MCF 10A (cell line): ENCODE measurements at regions of chr20 and their contacts with region 1.

Region 1: GRCh38 chr20:733861-734260 is 34.4 kb downstream of the SLC52A3 start:
- DNase-seq: no peak
- H3K4me3 Mint-ChIP-seq: no peak overlapping the region
- H3K27ac Mint-ChIP-seq: no peak overlapping the region
- H3K4me1 Mint-ChIP-seq: no peaks in the 10 kb centered on the region
- H3K27me3 Mint-ChIP-seq: peaks cover 38% of the 10 kb centered on the region
- CTCF ChIP-seq: no peak

Region 2: GRCh38 chr20:667391-667964 is 66.4 kb before region 1 on chr20:
- CTCF ChIA-PET with region 1: interaction called, 15 read pairs
- POLR2A ChIA-PET with region 1: interaction called, 3 read pairs
- intact Hi-C with region 1: loop called (anchors 5 kb)
- DNase-seq: peak; percentile 55
- H3K4me3 Mint-ChIP-seq: no peak overlapping the region
- H3K27ac Mint-ChIP-seq: no peak overlapping the region
- H3K4me1 Mint-ChIP-seq: no peaks in the 10 kb centered on the region
- H3K27me3 Mint-ChIP-seq: peaks cover 41% of the 10 kb centered on the region
- CTCF ChIP-seq: peak; percentile 86

Region 3: GRCh38 chr20:844473-845225 is 110.8 kb after region 1 on chr20:
- CTCF ChIA-PET with region 1: no interaction called
- POLR2A ChIA-PET with region 1: no interaction called
- intact Hi-C with region 1: no loop called
- DNase-seq: peak; percentile 90
- H3K4me3 Mint-ChIP-seq: peak overlapping the region; percentile 59
- H3K27ac Mint-ChIP-seq: peak overlapping the region; percentile 23
- H3K4me1 Mint-ChIP-seq: peaks cover 15% of the 10 kb centered on the region
- H3K27me3 Mint-ChIP-seq: no peaks in the 10 kb centered on the region
- CTCF ChIP-seq: no peak

Region 4: GRCh38 chr20:1015181-1015580 is 281.3 kb after region 1 on chr20:
- CTCF ChIA-PET with region 1: no interaction called
- POLR2A ChIA-PET with region 1: no interaction called
- intact Hi-C with region 1: no loop called
- DNase-seq: no peak
- H3K4me3 Mint-ChIP-seq: no peak overlapping the region
- H3K27ac Mint-ChIP-seq: no peak overlapping the region
- H3K4me1 Mint-ChIP-seq: no peaks in the 10 kb centered on the region
- H3K27me3 Mint-ChIP-seq: peaks cover 34% of the 10 kb centered on the region
- CTCF ChIP-seq: no peak